BJ (cell line): ENCODE measurements at regions of chr3 and their contacts with region 1.

Region 1: DNA sequence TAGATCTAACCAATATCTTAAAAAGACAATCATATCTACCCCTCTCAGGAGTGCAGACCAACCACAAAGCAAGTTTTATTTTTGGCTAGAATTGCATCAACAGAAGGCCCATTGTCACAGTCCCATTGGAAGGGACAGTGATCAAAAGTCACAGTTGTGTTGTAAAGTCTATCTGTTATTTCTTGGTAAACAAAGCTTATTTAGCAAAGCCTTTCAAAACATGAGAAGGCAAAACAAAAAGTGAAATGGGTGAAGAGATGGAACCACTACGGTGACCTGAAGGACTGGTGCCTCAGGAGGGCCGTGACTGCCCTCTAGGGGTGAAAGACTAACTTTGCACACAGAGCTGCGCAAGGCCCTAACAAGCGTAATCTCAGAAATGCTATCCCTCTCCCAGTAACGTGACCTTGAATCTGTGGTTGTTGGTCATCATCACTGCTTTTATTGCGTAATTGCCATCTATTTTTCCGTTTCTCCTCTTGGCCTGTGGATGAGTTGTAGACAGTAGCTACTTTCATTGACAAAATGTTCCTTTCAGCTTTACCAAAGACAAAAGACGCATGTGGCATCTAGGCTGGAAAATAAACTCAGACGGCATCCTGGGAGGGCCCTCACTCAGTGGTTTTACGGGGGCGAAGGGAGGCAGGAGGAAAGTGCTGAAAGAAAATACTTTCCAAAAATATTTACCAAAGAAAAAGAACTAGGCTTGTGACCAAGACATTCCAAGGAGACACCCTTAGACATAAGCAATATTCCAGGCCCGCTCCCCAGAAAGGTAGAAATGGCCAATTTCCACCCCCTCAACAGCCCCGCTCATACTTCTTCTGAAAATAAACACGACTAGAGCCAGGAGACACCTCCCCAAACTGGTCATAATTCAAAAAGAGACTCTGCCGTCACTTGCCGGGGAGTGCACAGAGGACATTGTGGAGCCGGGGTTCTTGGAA is 79.4 kb downstream of the FRMD4B start:
- DNase-seq: peak; percentile 54
- H3K4me3 ChIP-seq: no peak overlapping the region
- H3K27me3 ChIP-seq: no peaks in the 10 kb centered on the region
- CTCF ChIP-seq: peak; percentile 91

Region 2: GRCh38 chr3:69120879-69121464 is 185.5 kb before region 1 on chr3:
- CTCF ChIA-PET with region 1: interaction called, 27 read pairs
- POLR2A ChIA-PET with region 1: no interaction called
- DNase-seq: no peak
- H3K4me3 ChIP-seq: no peak overlapping the region
- H3K27me3 ChIP-seq: no peaks in the 10 kb centered on the region; the same call in 1 of the 2 replicates
- CTCF ChIP-seq: peak; percentile 96

Region 3: DNA sequence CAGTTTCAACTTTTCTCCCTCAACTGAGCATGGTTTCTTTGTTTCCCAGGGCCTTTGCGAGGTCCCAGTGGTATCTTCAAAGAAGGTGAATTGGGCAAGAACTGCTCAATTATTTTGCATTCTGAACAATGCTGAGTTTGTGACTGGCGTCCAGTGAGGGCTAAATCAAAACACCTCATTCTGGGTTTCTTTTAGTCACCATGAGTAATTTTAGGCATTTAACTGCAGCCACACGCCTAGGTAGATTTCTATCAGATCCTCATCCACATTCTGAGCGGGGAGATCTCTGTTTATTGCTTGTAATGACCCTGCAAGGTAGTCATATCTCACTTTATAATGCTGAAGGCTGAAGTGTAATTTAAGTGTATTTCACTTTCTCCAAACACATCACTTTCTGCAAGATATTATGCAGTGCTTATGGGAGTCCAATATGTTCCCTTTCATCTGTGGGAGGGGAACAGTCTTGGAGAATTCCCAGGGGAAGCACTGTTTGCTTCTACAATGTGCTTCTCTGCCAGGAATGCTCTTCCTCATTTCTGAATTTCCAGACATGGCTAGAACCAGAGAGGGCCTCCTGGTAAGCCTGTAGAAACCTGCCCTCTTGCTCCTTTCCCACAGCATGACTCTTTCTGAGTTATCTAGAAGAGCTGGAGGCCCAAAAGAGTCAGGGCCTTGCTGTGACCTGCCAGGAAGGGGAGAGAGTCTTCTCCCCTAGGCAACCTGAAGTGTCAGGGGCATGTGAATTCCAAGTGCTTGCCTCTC is 12.3 kb before region 1 on chr3:
- CTCF ChIA-PET with region 1: interaction called, 10 read pairs
- POLR2A ChIA-PET with region 1: no interaction called
- DNase-seq: no peak
- H3K4me3 ChIP-seq: no peak overlapping the region
- H3K27me3 ChIP-seq: no peaks in the 10 kb centered on the region; the same call in 1 of the 2 replicates
- CTCF ChIP-seq: no peak

Region 4: DNA sequence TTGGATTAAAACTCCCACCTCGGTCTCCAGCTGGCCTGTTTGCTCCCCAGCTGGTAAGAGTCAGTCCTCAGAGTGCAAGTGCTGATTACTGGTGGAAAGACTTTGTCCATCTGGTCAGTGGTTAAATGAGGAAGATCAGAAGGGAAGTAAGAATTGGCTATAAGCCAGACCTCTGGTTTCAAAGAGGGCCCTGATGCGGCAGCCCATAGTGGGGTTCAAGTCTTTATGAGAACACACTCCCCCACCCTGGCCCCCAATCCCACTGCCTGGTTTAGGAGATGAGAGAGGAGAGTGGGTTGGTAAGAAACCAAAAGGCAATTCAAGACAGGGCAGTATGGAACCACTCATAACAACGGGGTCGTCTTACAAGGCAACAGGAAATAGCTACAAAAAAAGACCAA is 14.4 kb after region 1 on chr3:
- CTCF ChIA-PET with region 1: interaction called, 22 read pairs
- POLR2A ChIA-PET with region 1: no interaction called
- DNase-seq: no peak
- H3K4me3 ChIP-seq: no peak overlapping the region
- H3K27me3 ChIP-seq: no peaks in the 10 kb centered on the region
- CTCF ChIP-seq: no peak

Region 5: DNA sequence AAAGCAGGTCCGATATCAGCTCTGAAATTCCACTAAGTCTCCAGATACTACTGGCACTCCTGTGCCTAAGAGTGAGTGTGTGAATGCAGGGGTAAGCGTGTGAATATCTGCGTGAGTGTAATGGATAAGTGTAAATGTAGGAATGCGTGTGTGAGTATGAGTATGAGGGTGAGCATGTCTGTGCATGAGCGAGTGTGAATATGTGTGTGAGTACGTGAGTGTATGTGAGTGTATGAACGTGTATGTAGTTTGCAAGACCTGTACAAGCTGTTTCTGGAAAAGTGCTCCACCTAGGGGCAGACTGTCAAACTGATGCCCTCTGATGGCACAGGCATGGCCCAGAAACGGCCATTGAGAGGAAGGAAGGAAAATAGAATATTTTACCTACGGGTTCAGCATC is 103.7 kb after region 1 on chr3:
- CTCF ChIA-PET with region 1: interaction called, 23 read pairs
- POLR2A ChIA-PET with region 1: no interaction called
- DNase-seq: no peak
- H3K4me3 ChIP-seq: no peak overlapping the region
- H3K27me3 ChIP-seq: no peaks in the 10 kb centered on the region; the same call in 1 of the 2 replicates
- CTCF ChIP-seq: peak; percentile 89